GM13976 (cell line): ENCODE measurements at regions of chr20 and their contacts with region 1.

Region 1: GRCh38 chr20:46757754-46758678 is 48.6 kb downstream of the SLC2A10 start:
- DNase-seq: peak; percentile 84
- CTCF ChIP-seq: peak; percentile 87

Region 2: DNA sequence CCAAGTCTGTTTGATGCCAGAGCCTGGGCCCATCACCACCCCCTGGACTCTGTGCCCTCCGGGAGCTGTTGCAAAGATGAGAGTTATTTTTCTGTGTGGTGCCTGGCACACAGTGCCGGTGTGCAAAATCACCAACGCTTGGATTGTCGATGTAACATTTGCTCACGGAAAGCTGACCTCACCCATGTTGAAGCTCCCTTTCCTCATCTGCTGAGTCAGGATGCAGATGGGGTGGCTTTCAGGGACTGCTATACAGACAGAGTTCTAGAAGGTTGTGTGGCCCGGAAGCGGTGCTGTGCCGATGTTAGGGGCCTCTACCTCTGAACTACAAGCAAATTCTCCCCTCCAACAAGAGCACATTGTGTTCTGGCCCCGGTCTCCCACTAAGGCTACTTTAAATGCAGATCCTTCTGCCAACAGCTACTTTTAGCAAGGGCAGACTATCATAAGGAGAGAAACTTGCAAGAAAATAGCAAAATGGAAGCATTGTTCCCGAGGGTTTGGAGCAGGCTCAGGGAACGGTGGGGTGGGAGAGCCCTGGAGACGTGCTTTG is 170.6 kb after region 1 on chr20:
- in situ Hi-C with region 1: no loop called
- DNase-seq: no peak
- CTCF ChIP-seq: no peak

Region 3: DNA sequence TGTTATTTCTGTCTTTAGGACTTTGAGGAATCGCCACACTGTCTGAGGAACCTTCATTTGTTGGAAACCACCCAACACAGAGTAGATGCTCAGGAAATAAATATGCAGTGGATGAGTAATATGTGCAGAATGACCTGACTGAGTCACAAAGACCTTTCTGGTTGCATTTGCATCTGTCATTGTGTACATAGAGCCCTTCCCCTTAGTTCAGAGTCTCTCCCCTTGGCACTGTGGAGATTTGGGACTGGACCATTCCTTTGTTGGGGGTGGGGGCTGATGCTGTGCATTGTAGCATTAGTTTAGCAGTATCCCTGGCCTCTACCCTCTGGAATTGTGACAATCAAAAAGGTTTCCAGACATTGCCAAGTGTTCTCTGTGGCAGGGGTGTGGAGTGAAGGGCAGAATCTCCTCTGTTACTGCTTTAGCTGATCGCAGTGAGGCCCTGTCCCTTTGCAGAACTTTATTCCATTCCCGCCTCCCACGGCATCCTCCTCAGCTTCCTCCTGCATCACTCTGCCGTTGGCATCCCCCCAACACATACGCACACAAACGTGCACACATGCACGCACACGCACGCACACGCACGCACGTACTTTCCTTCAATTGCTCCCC is 201.2 kb after region 1 on chr20:
- in situ Hi-C with region 1: no loop called
- DNase-seq: no peak
- CTCF ChIP-seq: no peak

Region 4: GRCh38 chr20:47392015-47392720 is 634.2 kb after region 1 on chr20:
- in situ Hi-C with region 1: loop called (anchors 25 kb)
- DNase-seq: peak; percentile 50
- CTCF ChIP-seq: no peak